ENCODE measurements at regions of chr2 and their contacts with region 1.

Region 1: GRCh38 chr2:102138331-102138730 is 4.2 kb upstream of the IL1R1 start:
- DNase-seq: peak in 1 of 2 donors; percentile 9
- ATAC-seq: peak; percentile 53 to 78 (median 60)
- H3K4me3 ChIP-seq: no peak overlapping the region
- H3K4me3 Mint-ChIP-seq: peak overlapping the region; percentile 13
- H3K27ac ChIP-seq: no peak overlapping the region
- H3K27ac Mint-ChIP-seq: no peak overlapping the region
- H3K4me1 ChIP-seq: peaks cover 33% of the 10 kb centered on the region
- H3K4me1 Mint-ChIP-seq: peaks cover 38 to 41% of the 10 kb centered on the region in 2 donors
- H3K27me3 ChIP-seq: peaks cover 13% of the 10 kb centered on the region
- H3K27me3 Mint-ChIP-seq: peaks cover 42 to 62% of the 10 kb centered on the region in 2 donors
- CTCF ChIP-seq: no peak

Region 2: DNA sequence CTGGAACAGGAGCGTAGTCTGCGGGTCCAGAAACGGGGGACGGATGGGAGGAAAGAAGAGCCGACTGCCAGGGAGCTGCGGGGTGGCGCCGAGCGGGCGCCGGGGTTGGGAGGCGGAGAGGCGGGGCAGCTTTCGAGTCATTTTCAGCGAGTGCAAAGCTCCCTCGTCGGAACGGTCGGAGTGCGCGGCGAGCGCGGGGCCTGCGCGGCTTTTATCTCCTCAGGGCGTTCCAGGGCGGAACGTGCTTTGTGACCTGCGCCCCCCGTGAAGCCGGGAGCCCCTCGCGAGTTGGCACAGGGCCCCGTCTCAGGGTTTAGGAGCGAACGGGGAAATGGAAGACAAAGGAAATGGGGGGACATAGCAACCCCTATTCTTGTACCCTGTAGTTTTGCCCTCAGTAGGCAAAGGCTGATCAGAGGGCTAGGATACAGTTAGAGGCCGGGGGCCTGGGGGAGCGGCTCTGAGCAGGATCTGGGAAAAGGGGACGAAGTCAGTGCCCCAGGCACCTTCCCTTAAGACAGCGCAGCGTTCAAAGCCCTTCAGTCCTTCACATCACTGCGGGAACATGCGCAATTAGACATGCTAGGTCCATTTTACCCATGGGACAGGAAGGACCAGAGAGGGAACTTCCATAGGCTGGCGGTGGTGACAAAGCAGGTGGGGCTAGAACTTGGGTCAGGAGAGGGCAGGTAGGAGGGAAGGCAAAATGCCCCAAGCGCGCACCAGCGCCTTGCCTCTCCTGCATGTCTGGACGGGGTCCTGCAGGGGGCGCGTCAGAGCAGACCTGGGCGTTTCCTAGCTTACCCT is 112.9 kb after region 1 on chr2:
- intact Hi-C with region 1: loop called (anchors 5 kb)
- DNase-seq: peak; percentile 59 to 80
- ATAC-seq: peak; percentile 66 to 82 (median 82)
- H3K4me3 ChIP-seq: peak overlapping the region; percentile 15
- H3K4me3 Mint-ChIP-seq: peak overlapping the region; percentile 92
- H3K27ac ChIP-seq: no peak overlapping the region
- H3K27ac Mint-ChIP-seq: peak overlapping the region in 1 of 2 donors; percentile 70
- H3K4me1 ChIP-seq: peaks cover 31% of the 10 kb centered on the region
- H3K4me1 Mint-ChIP-seq: peaks cover 35% of the 10 kb centered on the region in 2 donors
- H3K27me3 ChIP-seq: peaks cover 2% of the 10 kb centered on the region
- H3K27me3 Mint-ChIP-seq: peaks cover 0 to 8% of the 10 kb centered on the region in 2 donors
- CTCF ChIP-seq: peak; percentile 70

Measured in natural killer cell (primary cell).